Stomach (tissue), 19 donors: ENCODE measurements at regions of chr5 and their contacts with region 1.

Region 1: DNA sequence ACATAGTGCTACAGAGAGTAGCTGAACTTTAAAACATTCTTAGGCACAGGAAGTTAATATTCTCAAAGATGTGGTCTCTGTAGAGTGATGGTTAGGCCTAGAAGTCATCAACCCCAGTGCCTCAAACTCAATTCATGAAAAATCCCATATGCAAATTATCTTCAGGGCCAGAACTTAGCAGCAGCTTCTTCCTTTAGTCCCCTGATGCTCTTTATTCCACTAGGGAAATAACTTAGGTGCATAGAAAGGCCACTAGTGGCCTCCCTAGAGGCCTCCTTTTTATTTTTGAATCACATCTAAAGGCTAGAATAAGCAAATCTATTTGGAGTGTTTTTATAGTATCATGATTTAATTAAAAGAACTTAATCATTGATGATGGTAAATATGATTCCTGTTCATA is 88.3 kb downstream of the GIN1 start:
- DNase-seq: no peak
- H3K4me3 ChIP-seq: no peak overlapping the region
- H3K27ac ChIP-seq: no peak overlapping the region
- H3K4me1 ChIP-seq: no peaks in the 10 kb centered on the region
- H3K27me3 ChIP-seq: no peaks in the 10 kb centered on the region
- CTCF ChIP-seq: peak in 1 of 7 experiments; percentile 12
- EP300 ChIP-seq: no peak
- POLR2A ChIP-seq: no peak

Region 2: DNA sequence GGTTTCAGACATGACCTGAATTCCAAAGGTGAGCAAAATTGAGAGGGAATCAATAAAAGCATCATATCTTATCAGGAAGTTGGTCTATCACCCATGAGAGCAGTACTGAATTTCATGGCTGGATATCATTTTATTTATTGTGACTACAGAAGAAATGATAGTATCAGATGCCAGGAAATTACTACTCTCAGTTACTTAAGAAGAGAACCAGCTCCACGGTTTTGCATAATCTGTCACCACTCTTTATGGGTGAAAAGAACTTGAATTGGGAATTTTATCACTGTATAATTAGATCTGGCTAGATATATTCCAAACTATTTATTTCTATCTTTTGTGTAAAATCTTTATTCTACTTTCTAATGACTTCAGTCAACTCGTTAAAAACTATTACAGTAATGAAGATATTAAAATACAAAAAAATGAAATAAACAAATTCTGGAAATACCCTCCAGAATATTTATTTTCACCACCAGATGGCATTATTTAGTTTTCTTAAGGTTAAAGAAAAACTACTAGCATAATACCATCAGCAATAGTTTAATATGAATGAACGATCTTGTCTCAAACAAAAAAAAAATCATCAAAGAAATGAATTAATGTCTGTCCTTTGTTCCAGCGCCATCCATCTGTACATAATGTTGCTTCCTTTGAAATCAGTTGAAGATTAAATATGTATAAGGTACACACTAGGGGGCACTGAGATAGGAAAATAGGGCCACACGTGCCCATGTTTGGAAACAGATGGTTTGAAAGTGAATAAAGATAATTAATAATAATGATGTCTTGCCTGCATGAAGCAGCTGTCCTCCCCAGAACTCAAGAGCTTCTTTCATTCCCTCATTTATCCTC is 448.1 kb before region 1 on chr5:
- intact Hi-C with region 1: loop called (anchors 10 kb)
- DNase-seq: peak in 1 of 2 donors; percentile 20
- H3K4me3 ChIP-seq: no peak overlapping the region
- H3K27ac ChIP-seq: no peak overlapping the region
- H3K4me1 ChIP-seq: peaks cover 0 to 6% (median 0%) of the 10 kb centered on the region in 4 donors
- H3K27me3 ChIP-seq: no peaks in the 10 kb centered on the region
- CTCF ChIP-seq: peak in 1 of 7 experiments; percentile 35
- EP300 ChIP-seq: no peak
- POLR2A ChIP-seq: no peak

Region 3: DNA sequence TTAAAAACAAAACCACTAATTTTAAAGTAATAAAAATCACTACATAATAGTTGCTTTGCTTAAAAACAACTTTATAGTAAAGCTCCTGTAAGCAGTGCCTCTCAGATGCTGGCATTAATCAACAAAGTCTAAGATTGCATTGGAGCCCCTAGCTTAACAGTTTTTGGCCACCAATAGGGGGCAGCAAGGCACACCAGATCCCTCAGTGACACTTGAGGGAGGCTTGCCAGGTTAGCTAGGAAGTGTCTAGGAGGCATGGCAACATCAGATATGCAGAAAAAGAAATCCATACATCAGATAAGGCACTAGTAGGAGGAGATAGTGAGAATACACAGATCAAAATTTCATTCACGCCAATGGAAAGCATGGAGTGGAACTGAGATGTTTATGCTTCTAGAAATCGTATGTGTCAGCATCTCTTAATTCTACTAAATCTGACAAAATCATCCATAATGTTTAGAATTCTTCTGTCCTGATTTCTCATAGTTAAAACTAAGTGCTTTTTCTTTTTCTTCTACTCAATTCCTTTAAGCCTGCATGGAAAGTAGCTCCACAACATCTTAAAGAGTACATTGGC is 350.1 kb before region 1 on chr5:
- intact Hi-C with region 1: loop called (anchors 10 kb)
- DNase-seq: peak; percentile 73 to 86
- H3K4me3 ChIP-seq: no peak overlapping the region
- H3K27ac ChIP-seq: no peak overlapping the region
- H3K4me1 ChIP-seq: no peaks in the 10 kb centered on the region
- H3K27me3 ChIP-seq: no peaks in the 10 kb centered on the region
- CTCF ChIP-seq: peak in 5 of 7 experiments; percentile 36 to 69 (median 53)
- EP300 ChIP-seq: no peak
- POLR2A ChIP-seq: no peak